Heart right ventricle (tissue), 16 donors: ENCODE measurements at regions of chr9 and their contacts with region 1.

Region 1: DNA sequence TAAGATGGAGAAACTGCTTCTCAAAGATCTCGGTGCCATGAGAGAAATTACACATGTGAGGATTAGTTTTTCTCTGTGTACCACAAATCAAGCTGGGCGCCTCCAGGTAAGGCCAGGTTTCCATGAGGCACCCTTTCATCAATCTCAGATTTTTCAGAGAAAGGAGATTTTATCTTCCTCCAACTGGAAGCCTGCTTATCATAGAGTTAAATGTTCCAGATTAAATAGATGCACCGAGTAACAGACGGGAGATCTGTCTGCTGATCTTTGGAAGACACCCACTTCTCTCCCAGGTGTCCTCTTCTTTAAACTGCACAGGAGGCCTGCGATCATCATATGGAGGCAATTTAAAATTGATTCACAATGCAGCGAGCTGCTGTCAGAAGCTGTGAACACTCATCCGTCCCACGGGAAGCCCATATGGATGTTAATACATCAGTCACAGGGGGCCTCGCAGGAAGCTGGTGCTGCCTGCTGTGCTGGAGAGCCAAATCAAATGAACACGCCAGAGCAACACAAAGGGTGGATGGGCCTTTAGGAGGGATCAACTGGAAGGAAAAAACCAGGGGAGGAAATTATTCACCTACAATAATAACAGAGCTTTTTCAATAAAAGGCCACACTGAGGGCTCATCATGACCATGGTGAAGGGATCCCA is 93.3 kb downstream of the TLE1 start:
- DNase-seq: no peak
- ATAC-seq: peak in 1 of 8 donors; percentile 23
- H3K4me3 ChIP-seq: no peak overlapping the region
- H3K27ac ChIP-seq: peak overlapping the region in 1 of 10 donors; percentile 6
- H3K4me1 ChIP-seq: peaks cover 0 to 84% (median 42%) of the 10 kb centered on the region in 9 donors
- H3K27me3 ChIP-seq: no peaks in the 10 kb centered on the region
- CTCF ChIP-seq: no peak

Region 2: GRCh38 chr9:81671880-81672280 is 75.9 kb after region 1 on chr9:
- intact Hi-C with region 1: loop called in 1 of 10 experiments (anchors 5 kb)
- DNase-seq: peak; percentile 82 to 93
- ATAC-seq: peak; percentile 95 to 99 (median 98)
- H3K4me3 ChIP-seq: no peak overlapping the region
- H3K27ac ChIP-seq: peak overlapping the region in 2 of 10 donors; percentile 20 to 37
- H3K4me1 ChIP-seq: peaks cover 13 to 68% (median 31%) of the 10 kb centered on the region in 9 donors
- H3K27me3 ChIP-seq: no peaks in the 10 kb centered on the region
- CTCF ChIP-seq: peak in 2 of 9 donors; percentile 9 to 17